HepG2 (cell line): ENCODE measurements at regions of chr1 and their contacts with region 1.

Region 1: DNA sequence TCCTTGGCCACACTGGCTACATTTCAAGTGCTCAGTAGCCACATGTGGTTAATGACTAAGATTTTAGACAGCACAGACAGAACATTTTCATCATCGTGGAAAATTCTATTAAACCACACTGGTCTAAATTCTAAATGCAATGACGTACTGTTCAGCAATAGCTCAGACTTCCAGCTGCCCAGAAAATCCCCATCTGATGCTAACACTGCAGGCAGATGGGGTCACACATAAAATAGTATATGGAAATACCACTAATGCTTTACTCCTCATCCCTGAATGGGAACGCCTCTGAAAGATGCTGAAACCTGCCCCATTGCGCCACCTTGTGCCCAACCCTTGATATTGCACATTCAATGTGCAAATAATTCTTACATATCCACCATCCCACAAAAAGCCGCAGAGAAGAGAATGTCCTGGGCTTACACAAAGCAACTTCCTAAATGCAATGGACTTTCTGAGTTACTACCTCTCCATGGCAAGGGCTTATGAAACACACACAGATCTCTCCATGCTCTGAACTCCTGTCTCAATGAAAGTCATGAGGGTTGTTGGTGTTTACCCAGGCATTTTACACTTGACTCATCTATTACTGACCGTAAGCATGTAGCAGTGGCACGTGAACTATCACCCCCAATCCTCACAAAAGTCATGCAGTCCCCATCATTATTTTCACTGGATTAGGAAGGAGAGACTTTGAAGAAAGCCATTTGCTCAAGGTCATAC is 20.3 kb upstream of the SLC5A9 start:
- DNase-seq: peak; percentile 45
- ATAC-seq: peak; percentile 76
- H3K4me3 ChIP-seq: no peak overlapping the region
- H3K27ac ChIP-seq: no peak overlapping the region
- H3K4me1 ChIP-seq: no peaks in the 10 kb centered on the region
- H3K27me3 ChIP-seq: no peaks in the 10 kb centered on the region; a peak in 1 of 5 replicates
- CTCF ChIP-seq: peak; percentile 85
- EP300 ChIP-seq: no peak
- POLR2A ChIP-seq: no peak
- RAD21 ChIP-seq: peak; percentile 71; the same call in 1 of the 2 replicates

Region 2: GRCh38 chr1:48093696-48094528 is 108.3 kb before region 1 on chr1:
- CTCF ChIA-PET with region 1: interaction called, 21 read pairs
- POLR2A ChIA-PET with region 1: no interaction called
- in situ Hi-C with region 1: no loop called
- intact Hi-C with region 1: loop called (anchors 1 kb)
- DNase-seq: peak; percentile 65
- ATAC-seq: peak; percentile 99
- H3K4me3 ChIP-seq: peak overlapping the region; percentile 15 to 65 (median 43); a peak in 5 of 6 replicates
- H3K27ac ChIP-seq: no peak overlapping the region
- H3K4me1 ChIP-seq: peaks cover 4% of the 10 kb centered on the region; the same call in 1 of the 2 replicates
- H3K27me3 ChIP-seq: peaks cover 0 to 9% of the 10 kb centered on the region in 2 experiments; a peak in 3 of 5 replicates
- CTCF ChIP-seq: peak; percentile 91
- EP300 ChIP-seq: no peak
- POLR2A ChIP-seq: no peak
- RAD21 ChIP-seq: peak; percentile 77

Region 3: DNA sequence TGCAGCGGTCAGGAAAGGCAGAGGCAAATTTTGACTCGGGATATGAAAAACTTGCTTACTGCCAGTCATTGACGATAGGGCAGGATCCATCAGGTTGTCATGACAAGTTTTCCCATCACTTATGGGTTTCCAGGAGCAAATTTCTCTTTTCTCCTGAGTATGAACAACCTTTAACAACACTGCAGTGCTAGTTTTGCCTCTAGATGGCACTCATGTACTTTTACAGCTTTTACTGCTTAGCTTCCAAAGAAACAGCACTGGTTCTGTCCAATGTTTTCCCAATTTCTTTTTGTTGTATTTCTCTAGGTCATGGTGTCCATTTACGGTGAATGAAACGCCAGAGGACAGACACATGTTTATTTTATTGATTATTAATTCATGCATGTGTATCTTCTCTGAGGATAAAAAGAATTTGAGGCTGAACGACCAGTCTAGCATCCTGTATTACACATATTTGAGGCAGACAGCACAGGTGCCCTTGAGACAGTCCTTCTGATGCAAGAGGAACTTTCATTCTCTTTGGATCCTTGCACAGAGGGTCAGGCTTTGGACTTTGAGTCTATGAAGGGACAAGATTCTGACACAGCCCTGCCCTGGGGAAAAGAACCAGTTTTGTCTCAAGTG is 92.7 kb before region 1 on chr1:
- CTCF ChIA-PET with region 1: interaction called, 138 read pairs
- POLR2A ChIA-PET with region 1: no interaction called
- in situ Hi-C with region 1: loop called (anchors 5 kb)
- intact Hi-C with region 1: loop called (anchors 1 kb)
- DNase-seq: peak; percentile 61
- ATAC-seq: peak; percentile 84
- H3K4me3 ChIP-seq: no peak overlapping the region
- H3K27ac ChIP-seq: no peak overlapping the region
- H3K4me1 ChIP-seq: peaks cover 6% of the 10 kb centered on the region
- H3K27me3 ChIP-seq: no peaks in the 10 kb centered on the region
- CTCF ChIP-seq: peak; percentile 89
- EP300 ChIP-seq: no peak
- POLR2A ChIP-seq: no peak
- RAD21 ChIP-seq: peak; percentile 72

Region 4: GRCh38 chr1:48223366-48224240 is 21.4 kb after region 1 on chr1:
- CTCF ChIA-PET with region 1: no interaction called
- POLR2A ChIA-PET with region 1: no interaction called
- in situ Hi-C with region 1: no loop called
- intact Hi-C with region 1: no loop called
- DNase-seq: peak; percentile 52
- ATAC-seq: peak; percentile 13
- H3K4me3 ChIP-seq: peak overlapping the region; percentile 52 to 79 (median 61)
- H3K27ac ChIP-seq: peak overlapping the region; percentile 94
- H3K4me1 ChIP-seq: peaks cover 67% of the 10 kb centered on the region
- H3K27me3 ChIP-seq: no peaks in the 10 kb centered on the region
- CTCF ChIP-seq: no peak
- EP300 ChIP-seq: no peak
- POLR2A ChIP-seq: no peak
- RAD21 ChIP-seq: no peak

Region 5: DNA sequence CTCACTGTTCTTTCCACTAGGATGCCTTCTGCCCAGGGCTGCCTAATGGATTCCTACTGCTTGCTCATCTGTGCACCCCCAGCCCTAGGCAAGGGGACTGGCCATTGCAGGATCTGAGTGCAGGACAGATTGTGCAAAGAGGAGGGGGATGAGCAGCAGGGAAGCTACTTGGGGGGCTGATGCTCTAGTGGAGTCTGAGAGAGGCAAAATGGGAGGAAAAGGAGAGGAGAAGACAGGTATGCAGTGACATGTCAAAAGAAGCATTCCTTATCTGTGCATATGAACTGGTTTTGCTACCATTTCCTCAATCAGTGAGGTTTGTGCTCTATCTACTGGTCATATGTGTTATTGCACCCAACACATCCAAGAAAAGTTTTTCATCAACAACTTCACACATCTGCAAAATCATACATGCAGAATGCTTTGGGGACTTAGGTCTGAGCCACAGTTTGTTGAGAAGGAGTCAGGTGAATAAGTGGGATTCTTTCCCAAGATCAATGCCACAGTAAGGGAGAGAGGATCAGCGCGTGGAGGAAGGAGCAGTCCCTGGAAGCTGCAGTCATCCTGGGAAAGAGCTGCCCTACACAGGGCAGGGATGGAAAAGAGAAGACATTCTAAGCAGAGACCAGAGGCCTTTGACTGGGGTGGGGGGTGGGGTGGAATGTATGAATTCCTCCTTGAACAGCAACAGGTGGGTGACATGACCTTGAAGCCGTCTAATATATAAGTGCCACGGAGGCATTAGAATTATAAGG is 34.7 kb after region 1 on chr1:
- CTCF ChIA-PET with region 1: interaction called, 11 read pairs
- POLR2A ChIA-PET with region 1: no interaction called
- in situ Hi-C with region 1: no loop called
- intact Hi-C with region 1: loop called (anchors 1 kb)
- DNase-seq: peak; percentile 28
- ATAC-seq: peak; percentile 76
- H3K4me3 ChIP-seq: no peak overlapping the region
- H3K27ac ChIP-seq: no peak overlapping the region
- H3K4me1 ChIP-seq: peaks cover 14% of the 10 kb centered on the region
- H3K27me3 ChIP-seq: no peaks in the 10 kb centered on the region; a peak in 1 of 5 replicates
- CTCF ChIP-seq: peak; percentile 75
- EP300 ChIP-seq: no peak
- POLR2A ChIP-seq: 0 out of 4 replicates have a peak, but pooled peaks of 1 of the 2 experiments have one; percentile 0
- RAD21 ChIP-seq: peak; percentile 77